Activated CD4-positive, alpha-beta T cell treated with anti-CD3 and anti-CD28 coated beads for 36 hours (primary cell): ENCODE measurements at regions of chr17 and their contacts with region 1.

Region 1: GRCh38 chr17:43576563-43577229 is 30.6 kb upstream of the ETV4 start:
- DNase-seq: peak; percentile 81
- ATAC-seq: peak; percentile 80
- H3K4me3 Mint-ChIP-seq: no peak overlapping the region
- H3K27ac Mint-ChIP-seq: no peak overlapping the region
- H3K4me1 Mint-ChIP-seq: peaks cover 13% of the 10 kb centered on the region
- H3K27me3 Mint-ChIP-seq: peaks cover 5% of the 10 kb centered on the region

Region 2: GRCh38 chr17:42920922-42921321 is 655.8 kb before region 1 on chr17:
- CTCF ChIA-PET with region 1: no interaction called
- POLR2A ChIA-PET with region 1: no interaction called
- intact Hi-C with region 1: no loop called
- DNase-seq: no peak
- ATAC-seq: no peak
- H3K4me3 Mint-ChIP-seq: no peak overlapping the region
- H3K27ac Mint-ChIP-seq: no peak overlapping the region
- H3K4me1 Mint-ChIP-seq: no peaks in the 10 kb centered on the region
- H3K27me3 Mint-ChIP-seq: peaks cover 4% of the 10 kb centered on the region

Region 3: GRCh38 chr17:42997984-42998938 is 578.4 kb before region 1 on chr17 and contains the start of gene RPL27:
- CTCF ChIA-PET with region 1: no interaction called
- POLR2A ChIA-PET with region 1: no interaction called
- intact Hi-C with region 1: no loop called
- DNase-seq: peak; percentile 98
- ATAC-seq: peak; percentile 98
- H3K4me3 Mint-ChIP-seq: peak within 1 kb of the TSS; percentile 95
- H3K27ac Mint-ChIP-seq: peak within 1 kb of the TSS; percentile 99
- H3K4me1 Mint-ChIP-seq: peaks cover 31% of the 10 kb centered on the region
- H3K27me3 Mint-ChIP-seq: no peaks in the 10 kb centered on the region
- total RNA-seq, gene RPL27: 1,703 to 2,161 TPM

Region 4: GRCh38 chr17:43546319-43547188 is 30.1 kb before region 1 on chr17 and contains the start of gene ETV4:
- CTCF ChIA-PET with region 1: interaction called, 19 read pairs
- POLR2A ChIA-PET with region 1: no interaction called
- intact Hi-C with region 1: no loop called
- DNase-seq: peak; percentile 96
- ATAC-seq: peak; percentile 94
- H3K4me3 Mint-ChIP-seq: peak within 1 kb of the TSS; percentile 75
- H3K27ac Mint-ChIP-seq: peak within 1 kb of the TSS; percentile 16
- H3K4me1 Mint-ChIP-seq: peaks cover 17% of the 10 kb centered on the region
- H3K27me3 Mint-ChIP-seq: peaks cover 49% of the 10 kb centered on the region
- total RNA-seq, gene ETV4: 2.9 to 3.3 TPM

Region 5: GRCh38 chr17:43641416-43641815 is 64.7 kb after region 1 on chr17:
- CTCF ChIA-PET with region 1: interaction called, 12 read pairs
- POLR2A ChIA-PET with region 1: no interaction called
- intact Hi-C with region 1: no loop called
- DNase-seq: no peak
- ATAC-seq: no peak
- H3K4me3 Mint-ChIP-seq: no peak overlapping the region
- H3K27ac Mint-ChIP-seq: no peak overlapping the region
- H3K4me1 Mint-ChIP-seq: peaks cover 8% of the 10 kb centered on the region
- H3K27me3 Mint-ChIP-seq: peaks cover 10% of the 10 kb centered on the region

Region 6: DNA sequence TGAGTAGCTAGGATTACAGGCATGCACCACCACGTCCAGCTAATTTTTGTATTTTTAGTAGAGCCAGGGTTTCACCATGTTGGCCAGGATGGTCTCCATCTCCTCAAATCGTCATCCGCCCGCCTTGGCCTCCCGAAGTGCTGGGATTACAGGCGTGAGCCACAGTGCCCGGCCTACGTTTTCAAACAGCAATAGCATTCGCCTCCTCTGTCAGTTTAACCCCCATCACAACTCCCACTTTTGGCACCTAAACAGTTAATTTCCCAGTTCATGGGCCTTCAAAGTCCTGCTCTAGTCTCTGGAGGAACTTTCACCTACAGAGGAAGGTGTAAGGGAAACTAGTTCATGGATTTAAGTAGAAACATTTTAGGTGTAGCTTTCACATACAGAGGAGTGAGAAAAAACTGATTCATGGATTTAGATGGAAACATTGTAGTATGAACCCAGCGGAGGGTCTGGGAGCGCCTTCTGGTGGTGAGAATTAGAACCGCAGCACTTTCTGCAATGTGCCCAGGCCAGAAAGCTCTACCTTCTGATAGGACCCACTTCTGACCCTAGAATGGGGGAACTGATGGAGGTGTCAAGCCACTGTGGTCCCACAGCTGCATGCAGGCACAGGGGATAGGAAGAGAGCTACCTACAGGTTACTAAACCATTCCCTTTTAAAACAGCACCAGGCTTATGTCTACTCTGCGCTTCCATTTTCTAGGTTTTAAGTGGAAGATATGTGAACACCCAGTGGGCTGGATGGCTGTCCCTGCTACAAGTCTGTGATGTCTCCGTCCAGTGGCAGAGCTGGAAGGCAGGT is 97.0 kb after region 1 on chr17:
- CTCF ChIA-PET with region 1: interaction called, 26 read pairs
- POLR2A ChIA-PET with region 1: no interaction called
- intact Hi-C with region 1: loop called (anchors 1 kb)
- DNase-seq: peak; percentile 86
- ATAC-seq: peak; percentile 73
- H3K4me3 Mint-ChIP-seq: no peak overlapping the region
- H3K27ac Mint-ChIP-seq: no peak overlapping the region
- H3K4me1 Mint-ChIP-seq: peaks cover 8% of the 10 kb centered on the region
- H3K27me3 Mint-ChIP-seq: peaks cover 3% of the 10 kb centered on the region

Region 7: DNA sequence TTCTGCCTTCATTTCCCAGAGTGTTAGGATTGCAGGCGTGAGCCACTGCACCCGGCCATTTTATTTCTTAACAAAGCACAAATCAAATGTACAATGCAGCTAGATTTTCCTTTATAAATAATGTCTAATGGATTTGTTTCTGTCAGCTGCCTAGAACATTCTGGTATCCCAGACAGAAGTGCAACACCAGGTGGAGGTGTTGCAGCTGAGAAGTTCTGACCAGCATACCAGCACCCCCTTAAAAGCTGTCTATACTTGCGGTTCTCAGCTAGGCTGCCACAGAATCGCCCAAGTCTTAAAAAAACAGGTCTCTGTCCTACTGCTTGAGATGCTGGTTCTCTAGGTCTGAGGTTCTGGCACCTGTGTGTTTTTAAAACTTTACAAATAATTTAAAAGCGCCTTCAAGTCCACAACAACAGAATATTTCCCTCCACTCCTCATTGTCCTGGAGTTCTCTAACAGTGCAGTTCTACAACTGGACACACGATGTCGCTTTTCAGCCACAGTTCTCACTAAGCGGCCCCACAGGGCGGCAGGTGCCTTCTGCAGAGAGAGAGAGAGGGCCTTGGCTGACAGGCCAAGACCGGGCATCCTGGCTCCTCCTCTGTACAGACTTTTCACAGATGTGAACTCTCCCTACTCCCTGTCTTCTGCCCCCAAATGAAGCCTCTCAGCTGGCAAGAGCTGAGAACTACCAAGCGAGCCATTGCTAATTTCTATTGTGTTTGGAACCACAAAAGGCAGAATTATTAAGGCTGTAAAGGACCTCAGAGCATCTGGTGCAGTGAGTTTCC is 117.6 kb after region 1 on chr17:
- CTCF ChIA-PET with region 1: interaction called, 11 read pairs
- POLR2A ChIA-PET with region 1: no interaction called
- intact Hi-C with region 1: no loop called
- DNase-seq: peak; percentile 86
- ATAC-seq: peak; percentile 99
- H3K4me3 Mint-ChIP-seq: no peak overlapping the region
- H3K27ac Mint-ChIP-seq: no peak overlapping the region
- H3K4me1 Mint-ChIP-seq: no peaks in the 10 kb centered on the region
- H3K27me3 Mint-ChIP-seq: peaks cover 3% of the 10 kb centered on the region

Region 8: DNA sequence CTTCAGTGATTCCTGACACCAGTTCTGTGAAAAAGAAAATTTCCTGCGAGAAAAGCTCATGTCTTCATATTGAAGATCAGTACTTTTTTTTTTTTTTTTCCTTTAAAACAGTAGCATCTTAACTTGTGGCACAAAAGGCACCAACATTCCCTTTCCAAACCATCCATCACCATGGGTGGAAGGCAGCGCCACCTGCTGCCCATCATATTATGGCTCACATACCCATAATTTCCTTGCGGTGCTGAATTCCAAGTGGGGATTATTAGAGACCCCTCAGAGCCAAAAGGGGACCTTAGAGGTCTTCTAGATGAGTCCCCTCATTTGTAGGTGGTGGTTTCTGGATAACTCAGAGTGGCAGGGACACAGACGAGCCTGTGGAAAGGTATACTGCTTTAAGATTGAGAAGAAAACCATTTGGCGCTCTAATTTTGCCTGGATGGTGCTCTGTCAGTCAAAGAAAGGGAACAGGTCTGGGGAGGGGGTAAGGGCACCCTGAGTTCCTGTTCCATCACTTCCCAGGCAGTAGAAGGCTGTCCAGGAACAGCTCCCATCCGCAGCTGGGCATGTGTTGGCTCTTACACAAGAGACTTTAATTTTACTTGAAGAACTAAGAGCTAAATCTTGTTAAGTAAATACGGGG is 189.8 kb after region 1 on chr17:
- CTCF ChIA-PET with region 1: interaction called, 24 read pairs
- POLR2A ChIA-PET with region 1: no interaction called
- intact Hi-C with region 1: loop called in 1 of 2 experiments (anchors 5 kb)
- DNase-seq: peak; percentile 73
- ATAC-seq: no peak
- H3K4me3 Mint-ChIP-seq: no peak overlapping the region
- H3K27ac Mint-ChIP-seq: no peak overlapping the region
- H3K4me1 Mint-ChIP-seq: no peaks in the 10 kb centered on the region
- H3K27me3 Mint-ChIP-seq: no peaks in the 10 kb centered on the region